ENCODE measurements at regions of chr17 and their contacts with region 1.

Region 1: GRCh38 chr17:4997302-4998026 is at the starts of genes INCA1 and KIF1C:
- DNase-seq: peak; percentile 83 to 96 (median 89)
- ATAC-seq: peak; percentile 98
- H3K4me3 ChIP-seq: peak within 1 kb of the TSS; percentile 62
- H3K4me3 Mint-ChIP-seq: peak within 1 kb of the TSS; percentile 85
- H3K27ac ChIP-seq: peak within 1 kb of the TSS; percentile 22 to 69
- H3K27ac Mint-ChIP-seq: peak within 1 kb of the TSS; percentile 81
- H3K4me1 ChIP-seq: peaks cover 24% of the 10 kb centered on the region
- H3K4me1 Mint-ChIP-seq: peaks cover 25% of the 10 kb centered on the region
- H3K27me3 ChIP-seq: no peaks in the 10 kb centered on the region
- H3K27me3 Mint-ChIP-seq: no peaks in the 10 kb centered on the region
- CTCF ChIP-seq: no peak
- total RNA-seq, gene INCA1: 0.19 TPM in 1 of 2 experiments, not detected in the other
- total RNA-seq, gene KIF1C: 10.2 to 12.2 TPM

Region 2: GRCh38 chr17:4948931-4949320 is 48.5 kb before region 1 on chr17:
- CTCF ChIA-PET with region 1: no interaction called
- POLR2A ChIA-PET with region 1: interaction called, 17 read pairs
- intact Hi-C with region 1: loop called in 1 of 2 experiments (anchors 2 kb)
- DNase-seq: peak in 13 of 14 experiments; percentile 36 to 89 (median 66)
- ATAC-seq: peak; percentile 32
- H3K4me3 ChIP-seq: peak overlapping the region; percentile 99
- H3K4me3 Mint-ChIP-seq: peak overlapping the region; percentile 99
- H3K27ac ChIP-seq: peak overlapping the region; percentile 84 to 98
- H3K27ac Mint-ChIP-seq: peak overlapping the region; percentile 90
- H3K4me1 ChIP-seq: peaks cover 45% of the 10 kb centered on the region
- H3K4me1 Mint-ChIP-seq: peaks cover 51% of the 10 kb centered on the region
- H3K27me3 ChIP-seq: no peaks in the 10 kb centered on the region
- H3K27me3 Mint-ChIP-seq: no peaks in the 10 kb centered on the region
- CTCF ChIP-seq: no peak

Region 3: GRCh38 chr17:4974115-4974670 is 23.3 kb before region 1 on chr17:
- CTCF ChIA-PET with region 1: no interaction called
- POLR2A ChIA-PET with region 1: no interaction called
- intact Hi-C with region 1: no loop called
- DNase-seq: no peak
- ATAC-seq: no peak
- H3K4me3 ChIP-seq: no peak overlapping the region
- H3K4me3 Mint-ChIP-seq: no peak overlapping the region
- H3K27ac ChIP-seq: peak overlapping the region in 1 of 2 donors; percentile 36
- H3K27ac Mint-ChIP-seq: peak overlapping the region; percentile 49
- H3K4me1 ChIP-seq: peaks cover 15% of the 10 kb centered on the region
- H3K4me1 Mint-ChIP-seq: peaks cover 8% of the 10 kb centered on the region
- H3K27me3 ChIP-seq: no peaks in the 10 kb centered on the region
- H3K27me3 Mint-ChIP-seq: no peaks in the 10 kb centered on the region
- CTCF ChIP-seq: no peak

Region 4: GRCh38 chr17:4986951-4987766 is 10.3 kb before region 1 on chr17 and contains the start of gene CAMTA2:
- CTCF ChIA-PET with region 1: interaction called, 12 read pairs
- POLR2A ChIA-PET with region 1: interaction called, 38 read pairs
- intact Hi-C with region 1: loop called in 1 of 2 experiments (anchors 1 kb)
- DNase-seq: peak; percentile 74 to 92 (median 86)
- ATAC-seq: peak; percentile 90
- H3K4me3 ChIP-seq: peak within 1 kb of the TSS; percentile 99
- H3K4me3 Mint-ChIP-seq: peak within 1 kb of the TSS; percentile 94
- H3K27ac ChIP-seq: peak within 1 kb of the TSS; percentile 90 to 92
- H3K27ac Mint-ChIP-seq: peak within 1 kb of the TSS; percentile 87
- H3K4me1 ChIP-seq: peaks cover 36% of the 10 kb centered on the region
- H3K4me1 Mint-ChIP-seq: peaks cover 40% of the 10 kb centered on the region
- H3K27me3 ChIP-seq: no peaks in the 10 kb centered on the region
- H3K27me3 Mint-ChIP-seq: no peaks in the 10 kb centered on the region
- CTCF ChIP-seq: peak; percentile 91
- total RNA-seq, gene CAMTA2: 41.6 to 51.3 TPM

Region 5: GRCh38 chr17:5065227-5065744 is 67.8 kb after region 1 on chr17:
- CTCF ChIA-PET with region 1: no interaction called
- POLR2A ChIA-PET with region 1: no interaction called
- intact Hi-C with region 1: no loop called
- DNase-seq: no peak
- ATAC-seq: no peak
- H3K4me3 ChIP-seq: no peak overlapping the region
- H3K4me3 Mint-ChIP-seq: no peak overlapping the region
- H3K27ac ChIP-seq: no peak overlapping the region
- H3K27ac Mint-ChIP-seq: no peak overlapping the region
- H3K4me1 ChIP-seq: peaks cover 4% of the 10 kb centered on the region
- H3K4me1 Mint-ChIP-seq: peaks cover 5% of the 10 kb centered on the region
- H3K27me3 ChIP-seq: no peaks in the 10 kb centered on the region
- H3K27me3 Mint-ChIP-seq: no peaks in the 10 kb centered on the region
- CTCF ChIP-seq: no peak

Region 6: GRCh38 chr17:5364156-5364555 is 366.7 kb after region 1 on chr17:
- CTCF ChIA-PET with region 1: no interaction called
- POLR2A ChIA-PET with region 1: no interaction called
- intact Hi-C with region 1: no loop called
- DNase-seq: no peak
- ATAC-seq: no peak
- H3K4me3 ChIP-seq: no peak overlapping the region
- H3K4me3 Mint-ChIP-seq: no peak overlapping the region
- H3K27ac ChIP-seq: no peak overlapping the region
- H3K27ac Mint-ChIP-seq: peak overlapping the region; percentile 4
- H3K4me1 ChIP-seq: no peaks in the 10 kb centered on the region
- H3K4me1 Mint-ChIP-seq: no peaks in the 10 kb centered on the region
- H3K27me3 ChIP-seq: no peaks in the 10 kb centered on the region
- H3K27me3 Mint-ChIP-seq: no peaks in the 10 kb centered on the region
- CTCF ChIP-seq: no peak